OCI-LY7 (cell line): ENCODE measurements at regions of chr3 and their contacts with region 1.

Region 1: DNA sequence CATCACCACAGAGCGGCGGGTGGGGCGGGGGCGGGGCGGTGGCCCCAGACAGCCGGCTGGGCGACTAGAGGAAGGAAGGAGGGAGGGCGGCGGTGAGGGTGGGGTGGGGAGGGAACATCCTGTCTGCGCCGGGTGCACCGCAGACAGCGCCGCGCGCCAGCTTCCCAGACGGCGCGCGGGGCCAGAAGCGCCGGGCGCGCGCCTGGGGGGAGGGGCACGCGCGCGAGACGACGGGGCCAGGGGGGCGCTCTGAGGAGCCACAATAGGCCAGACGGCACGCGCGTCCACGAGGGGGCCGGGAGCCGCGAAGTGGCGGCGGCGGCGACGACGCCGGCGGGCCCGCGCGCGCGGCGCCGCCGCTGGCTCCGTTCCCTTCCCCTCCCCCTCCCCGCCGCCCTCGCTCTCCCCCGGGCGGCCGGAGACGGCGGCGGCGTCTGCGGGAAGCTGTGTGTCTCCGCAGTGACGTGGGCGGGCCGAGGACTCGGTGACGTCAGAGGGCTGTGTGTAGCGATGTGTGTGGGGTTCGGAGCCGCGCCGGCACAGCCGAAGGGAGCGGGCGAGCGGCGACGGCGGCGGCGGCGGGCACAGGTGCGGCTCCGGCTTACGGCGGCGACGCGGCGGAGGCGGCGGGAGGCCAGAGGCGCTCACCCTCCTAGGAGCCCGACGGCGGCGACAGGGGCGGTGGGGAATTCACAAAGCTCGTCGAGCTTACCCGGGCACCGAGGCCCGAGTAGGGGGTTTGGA is at the start of gene SKIL:
- DNase-seq: peak; percentile 97
- H3K4me3 ChIP-seq: peak within 1 kb of the TSS; percentile 97
- H3K27ac ChIP-seq: peak within 1 kb of the TSS; percentile 94
- H3K4me1 ChIP-seq: peaks cover 54% of the 10 kb centered on the region
- CTCF ChIP-seq: no peak
- total RNA-seq, gene SKIL: 60.9 and 82.6 TPM in 2 replicates

Region 2: DNA sequence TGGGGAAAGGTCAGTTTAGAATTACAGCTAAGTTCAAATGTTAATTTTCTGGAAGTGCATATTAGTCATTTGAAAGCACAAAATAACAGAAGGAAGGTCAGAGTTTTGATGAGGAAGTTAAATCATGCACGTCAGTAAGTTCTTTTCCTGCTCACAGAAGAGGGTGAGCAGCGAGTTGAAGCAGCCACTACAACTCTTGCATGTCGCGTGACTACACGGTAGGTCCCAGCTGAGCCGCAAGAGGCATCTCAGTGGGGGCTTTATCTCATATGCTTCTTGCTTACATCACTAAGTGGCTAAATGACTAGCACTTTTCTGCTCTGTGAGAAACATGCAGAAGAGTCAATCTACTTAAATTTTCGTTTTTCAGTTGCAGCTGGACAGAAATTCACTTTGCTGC is 412.0 kb before region 1 on chr3:
- CTCF ChIA-PET with region 1: no interaction called
- POLR2A ChIA-PET with region 1: no interaction called
- intact Hi-C with region 1: loop called (anchors 2 kb)
- DNase-seq: peak; percentile 93
- H3K4me3 ChIP-seq: peak overlapping the region; percentile 55
- H3K27ac ChIP-seq: peak overlapping the region; percentile 99
- H3K4me1 ChIP-seq: peaks cover 98% of the 10 kb centered on the region
- CTCF ChIP-seq: 0 out of 2 replicates have a peak, but pooled peaks have one; percentile 35

Region 3: GRCh38 chr3:170221924-170222646 is 135.3 kb before region 1 on chr3 and contains the start of gene PRKCI:
- CTCF ChIA-PET with region 1: no interaction called
- POLR2A ChIA-PET with region 1: no interaction called
- intact Hi-C with region 1: loop called (anchors 5 kb)
- DNase-seq: peak; percentile 98
- H3K4me3 ChIP-seq: peak within 1 kb of the TSS; percentile 71
- H3K27ac ChIP-seq: peak within 1 kb of the TSS; percentile 39
- H3K4me1 ChIP-seq: peaks cover 11% of the 10 kb centered on the region
- CTCF ChIP-seq: no peak
- total RNA-seq, gene PRKCI: 27.6 and 28.9 TPM in 2 replicates

Region 4: DNA sequence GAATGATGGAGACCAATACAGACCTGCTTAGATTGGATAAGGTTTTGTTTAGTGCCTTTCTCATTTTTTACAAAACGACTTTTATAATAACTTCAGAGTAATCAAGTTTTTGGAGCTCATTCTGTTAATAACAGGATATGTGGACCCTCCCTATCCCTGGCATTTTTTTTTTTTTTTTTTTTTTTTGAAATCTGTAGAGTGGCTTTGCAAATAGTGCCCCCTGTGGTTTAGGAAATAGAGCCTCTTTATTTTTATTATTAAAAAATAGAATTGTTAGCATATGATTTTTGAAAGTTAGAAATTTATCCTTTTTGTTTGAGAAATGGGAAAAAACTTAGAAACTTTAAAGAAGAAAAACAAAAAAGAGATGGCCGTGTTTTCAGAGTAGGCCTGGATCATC is 11.6 kb after region 1 on chr3:
- CTCF ChIA-PET with region 1: no interaction called
- POLR2A ChIA-PET with region 1: interaction called, 17 read pairs
- intact Hi-C with region 1: loop called (anchors 1 kb)
- DNase-seq: no peak
- H3K4me3 ChIP-seq: peak overlapping the region; percentile 69
- H3K27ac ChIP-seq: peak overlapping the region; percentile 80
- H3K4me1 ChIP-seq: peaks cover 81% of the 10 kb centered on the region
- CTCF ChIP-seq: peak; percentile 86

Region 5: GRCh38 chr3:170414202-170414663 is 56.9 kb after region 1 on chr3:
- CTCF ChIA-PET with region 1: no interaction called
- POLR2A ChIA-PET with region 1: no interaction called
- intact Hi-C with region 1: no loop called
- DNase-seq: peak; percentile 73
- H3K4me3 ChIP-seq: no peak overlapping the region
- H3K27ac ChIP-seq: no peak overlapping the region
- H3K4me1 ChIP-seq: no peaks in the 10 kb centered on the region
- CTCF ChIP-seq: peak; percentile 99

Region 6: DNA sequence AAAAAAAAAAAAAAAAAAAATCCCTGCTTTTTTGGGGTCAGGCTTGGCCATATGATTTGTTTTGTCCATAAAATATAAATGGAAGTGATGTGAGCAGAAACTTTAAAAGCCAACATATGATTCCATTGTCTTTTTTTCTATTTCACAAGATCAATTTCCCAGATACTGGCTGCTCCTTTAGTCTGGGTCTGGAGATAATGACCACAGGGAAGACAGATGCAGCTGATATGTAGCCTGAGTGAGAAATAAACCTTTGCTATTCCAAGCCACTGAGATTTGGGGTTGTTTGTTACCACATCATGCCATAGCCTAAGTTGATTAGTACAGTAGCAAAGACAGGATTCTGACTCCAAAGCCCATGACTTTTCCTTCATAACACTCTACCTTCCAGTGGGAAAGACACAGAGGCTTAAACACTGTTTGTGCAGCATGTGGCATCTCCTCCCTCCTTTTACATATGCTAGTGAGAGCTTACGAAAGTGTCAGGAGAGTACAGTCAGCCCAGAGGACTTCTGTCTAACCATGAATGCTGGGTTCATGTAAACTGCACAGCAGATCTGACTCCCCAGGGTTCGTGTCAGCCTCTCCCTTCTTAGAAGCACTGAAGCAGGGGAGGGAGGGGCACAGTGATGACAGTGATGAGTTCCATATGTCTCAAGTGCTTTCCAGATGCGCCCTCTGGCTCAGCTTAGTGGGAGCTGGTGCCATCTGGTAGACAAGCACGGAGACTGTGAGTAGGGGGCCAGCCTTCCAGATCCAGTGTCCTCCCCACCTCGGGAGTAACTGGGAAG is 265.2 kb after region 1 on chr3:
- CTCF ChIA-PET with region 1: no interaction called
- POLR2A ChIA-PET with region 1: no interaction called
- intact Hi-C with region 1: no loop called
- DNase-seq: no peak
- H3K4me3 ChIP-seq: no peak overlapping the region
- H3K27ac ChIP-seq: no peak overlapping the region
- H3K4me1 ChIP-seq: no peaks in the 10 kb centered on the region
- CTCF ChIP-seq: no peak